ENCODE measurements at regions of chr17 and their contacts with region 1.

Region 1: DNA sequence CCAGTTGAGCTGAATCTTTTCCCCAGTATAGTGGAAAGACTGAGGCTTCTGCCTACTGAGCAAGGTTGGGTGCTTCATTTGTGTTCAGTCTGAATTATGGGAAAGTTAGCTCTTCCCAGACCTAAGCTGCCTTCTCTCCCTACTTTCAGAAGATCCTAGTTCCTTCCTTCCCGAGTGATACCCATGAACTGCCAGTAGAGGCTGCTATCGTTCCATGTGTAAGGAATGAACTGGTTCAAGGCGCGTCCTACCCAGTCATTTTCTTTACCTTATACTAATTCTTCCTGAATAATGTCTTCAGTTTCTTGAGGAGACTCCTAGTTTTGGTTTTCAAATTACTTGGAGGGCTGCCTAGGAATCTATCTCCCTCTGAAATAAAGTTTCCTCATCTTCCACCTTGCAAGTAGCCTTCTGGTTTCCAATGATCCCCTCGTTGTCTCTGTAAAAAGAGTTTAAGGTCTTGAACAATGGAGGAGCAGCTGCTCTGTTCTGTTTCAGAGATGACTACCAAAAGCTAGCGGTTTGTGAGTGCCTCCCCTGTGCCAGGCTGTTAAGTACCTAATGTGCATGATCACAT is 934 bp upstream of the AOC2 start:
- DNase-seq: peak; percentile 82 to 91
- ATAC-seq: peak; percentile 80 to 85
- H3K4me3 ChIP-seq: no peak overlapping the region
- H3K27ac ChIP-seq: no peak overlapping the region
- H3K4me1 ChIP-seq: no peaks in the 10 kb centered on the region
- CTCF ChIP-seq: peak; percentile 99
- EP300 ChIP-seq: no peak
- POLR2A ChIP-seq: no peak
- RAD21 ChIP-seq: peak; percentile 96 to 99

Region 2: DNA sequence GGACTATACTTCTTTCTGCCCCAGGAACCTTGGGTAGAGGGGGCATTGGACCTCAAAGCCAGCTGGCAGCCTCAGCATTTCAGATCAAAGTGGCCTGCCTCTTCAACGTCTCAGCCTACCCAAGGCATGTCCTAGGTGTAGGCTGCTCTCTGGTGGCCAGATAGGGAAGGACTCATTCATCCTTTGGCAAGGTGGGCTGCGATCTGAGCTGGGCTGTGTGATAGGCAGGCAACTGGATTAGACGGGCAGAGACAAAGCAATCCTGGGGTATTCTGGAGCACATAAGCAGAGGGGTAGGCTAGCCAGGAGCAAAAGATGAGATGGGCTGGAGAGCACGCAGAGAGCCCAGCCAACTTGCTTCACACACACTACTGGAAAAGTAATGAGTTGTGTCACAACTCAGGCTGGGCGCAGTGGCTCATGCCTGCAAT is 316.2 kb before region 1 on chr17:
- CTCF ChIA-PET with region 1: no interaction called
- POLR2A ChIA-PET with region 1: no interaction called
- DNase-seq: peak; percentile 79 to 91
- ATAC-seq: peak; percentile 85 to 92
- H3K4me3 ChIP-seq: no peak overlapping the region
- H3K27ac ChIP-seq: peak overlapping the region; percentile 50 to 80; a peak in 5 of 6 replicates
- H3K4me1 ChIP-seq: peaks cover 50% of the 10 kb centered on the region
- CTCF ChIP-seq: peak; percentile 98
- EP300 ChIP-seq: no peak
- POLR2A ChIP-seq: no peak
- RAD21 ChIP-seq: peak; percentile 99 to 100

Region 3: GRCh38 chr17:42809250-42809649 is 34.2 kb before region 1 on chr17:
- CTCF ChIA-PET with region 1: interaction called, 14 read pairs
- POLR2A ChIA-PET with region 1: no interaction called
- DNase-seq: peak; percentile 27 to 49
- ATAC-seq: peak; percentile 63 to 65; a peak in 3 of 6 replicates
- H3K4me3 ChIP-seq: no peak overlapping the region
- H3K27ac ChIP-seq: peak overlapping the region in 1 of 2 experiments; percentile 9; a peak in 1 of 6 replicates
- H3K4me1 ChIP-seq: peaks cover 21% of the 10 kb centered on the region
- CTCF ChIP-seq: no peak
- EP300 ChIP-seq: no peak
- POLR2A ChIP-seq: no peak
- RAD21 ChIP-seq: no peak

Region 4: DNA sequence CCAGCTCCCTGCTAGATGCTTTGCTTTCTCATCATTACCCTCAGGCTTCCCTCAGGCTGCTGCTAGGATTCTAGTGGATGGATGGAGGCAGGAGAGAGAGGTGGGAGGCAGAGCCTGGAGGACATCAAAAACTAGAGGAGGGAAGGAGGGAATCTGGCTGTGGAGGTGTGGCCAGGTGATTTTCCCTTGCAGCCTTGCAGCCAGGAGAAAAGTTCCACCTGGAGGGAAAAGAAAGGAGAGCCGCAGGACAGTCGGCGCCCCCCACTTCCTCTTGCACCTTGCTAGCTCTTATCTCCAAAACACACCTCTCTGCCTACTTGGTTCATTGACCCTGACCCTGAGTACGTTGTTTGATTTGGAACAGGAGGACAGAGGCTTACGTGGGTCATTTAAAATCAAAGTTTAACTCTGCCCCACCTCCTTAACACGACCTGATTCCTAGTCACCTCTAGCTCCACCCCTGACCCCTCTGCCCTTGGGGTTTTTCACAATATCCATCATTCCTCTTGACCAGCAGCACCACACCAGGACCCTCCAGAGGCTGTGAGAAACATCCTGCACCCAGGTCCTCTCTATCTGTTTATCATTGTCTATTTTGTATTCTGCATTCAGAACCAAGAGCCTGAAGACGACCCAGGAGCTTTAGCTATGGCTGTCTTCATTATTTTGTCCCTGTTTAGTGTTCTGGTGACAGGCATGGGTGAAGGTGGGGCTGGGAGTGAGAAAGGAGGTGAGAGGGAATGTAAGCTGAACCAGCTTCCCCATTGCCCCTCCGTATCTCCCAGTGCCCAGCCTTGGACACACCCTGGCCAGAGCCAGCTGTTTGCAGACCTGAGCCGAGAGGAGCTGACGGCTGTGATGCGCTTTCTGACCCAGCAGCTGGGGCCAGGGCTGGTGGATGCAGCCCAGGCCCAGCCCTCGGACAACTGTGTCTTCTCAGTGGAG is 23.5 kb after region 1 on chr17:
- CTCF ChIA-PET with region 1: interaction called, 89 read pairs
- POLR2A ChIA-PET with region 1: no interaction called
- DNase-seq: no peak
- ATAC-seq: peak; percentile 14 to 31; a peak in 2 of 6 replicates
- H3K4me3 ChIP-seq: no peak overlapping the region
- H3K27ac ChIP-seq: no peak overlapping the region
- H3K4me1 ChIP-seq: no peaks in the 10 kb centered on the region
- CTCF ChIP-seq: no peak
- EP300 ChIP-seq: no peak
- POLR2A ChIP-seq: no peak
- RAD21 ChIP-seq: no peak

Region 5: GRCh38 chr17:42895185-42895555 is 51.7 kb after region 1 on chr17:
- CTCF ChIA-PET with region 1: interaction called, 17 read pairs
- POLR2A ChIA-PET with region 1: no interaction called
- DNase-seq: peak; percentile 78 to 86
- ATAC-seq: peak; percentile 93 to 96
- H3K4me3 ChIP-seq: no peak overlapping the region
- H3K27ac ChIP-seq: peak overlapping the region; percentile 68 to 78
- H3K4me1 ChIP-seq: peaks cover 27% of the 10 kb centered on the region
- CTCF ChIP-seq: no peak
- EP300 ChIP-seq: no peak
- POLR2A ChIP-seq: no peak
- RAD21 ChIP-seq: no peak

Region 6: GRCh38 chr17:42937712-42938596 is 94.5 kb after region 1 on chr17:
- CTCF ChIA-PET with region 1: interaction called, 372 read pairs
- POLR2A ChIA-PET with region 1: no interaction called
- DNase-seq: peak; percentile 78 to 81
- ATAC-seq: peak; percentile 96
- H3K4me3 ChIP-seq: no peak overlapping the region
- H3K27ac ChIP-seq: no peak overlapping the region
- H3K4me1 ChIP-seq: no peaks in the 10 kb centered on the region
- CTCF ChIP-seq: peak; percentile 93
- EP300 ChIP-seq: no peak
- POLR2A ChIP-seq: no peak
- RAD21 ChIP-seq: peak; percentile 97 to 98

Region 7: GRCh38 chr17:42964161-42964932 is 120.9 kb after region 1 on chr17 and contains the start of gene AARSD1:
- CTCF ChIA-PET with region 1: interaction called, 14 read pairs
- POLR2A ChIA-PET with region 1: no interaction called
- DNase-seq: peak; percentile 93 to 98
- ATAC-seq: peak; percentile 94 to 98
- H3K4me3 ChIP-seq: peak within 1 kb of the TSS; percentile 79
- H3K27ac ChIP-seq: peak within 1 kb of the TSS; percentile 74 to 89
- H3K4me1 ChIP-seq: peaks cover 8% of the 10 kb centered on the region; the same call in 2 of the 3 replicates
- CTCF ChIP-seq: no peak
- EP300 ChIP-seq: no peak
- POLR2A ChIP-seq: peak; percentile 97
- RAD21 ChIP-seq: 0 out of 5 replicates have a peak, but pooled peaks of 1 of the 2 experiments have one; percentile 5
- polyA plus RNA-seq, gene AARSD1: 56.9 and 66.6 TPM in 2 replicates

Region 8: DNA sequence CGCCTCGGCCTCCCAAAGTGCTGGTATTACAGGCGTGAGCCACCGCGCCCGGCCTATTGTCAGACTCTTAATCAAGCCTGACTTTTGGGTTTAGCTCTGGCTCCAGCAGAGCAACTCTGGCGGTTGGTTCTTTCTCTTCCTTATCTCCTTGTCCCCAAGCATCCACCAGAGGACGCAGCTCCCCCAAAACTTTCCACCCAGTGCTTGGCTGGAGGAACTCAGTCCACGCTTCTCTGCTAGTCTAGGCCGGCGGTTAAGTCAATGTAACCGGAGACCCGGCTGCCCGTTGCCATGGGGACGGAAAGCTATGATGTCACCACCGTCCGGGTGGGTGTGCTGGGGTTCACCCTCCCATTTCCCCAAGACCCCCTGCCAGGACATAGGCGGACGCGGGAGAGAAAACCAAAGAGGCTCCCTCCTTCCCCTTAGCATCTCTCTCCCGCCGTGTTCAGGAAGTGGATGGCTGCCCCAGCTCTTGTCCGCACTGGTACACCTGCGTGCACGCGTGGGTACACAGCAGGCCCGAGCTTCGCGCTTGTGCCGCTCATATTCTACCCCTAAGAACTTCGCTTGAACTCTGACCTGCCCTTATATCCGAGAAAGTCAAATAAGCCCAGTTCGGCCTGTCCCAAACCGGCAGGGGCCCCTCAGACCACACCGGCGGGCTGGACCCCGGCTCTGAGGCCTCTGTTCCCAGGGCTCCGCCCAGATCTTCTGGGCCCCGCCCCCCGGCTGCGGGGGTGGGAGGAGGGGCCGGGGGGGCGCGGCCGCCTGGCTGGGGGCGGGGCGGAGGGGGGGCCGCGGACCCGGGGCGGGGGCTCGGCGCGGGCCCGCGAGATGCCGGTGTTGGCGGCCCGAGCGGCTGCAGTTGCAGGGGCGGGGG is 181.2 kb after region 1 on chr17 and contains the start of gene RND2:
- CTCF ChIA-PET with region 1: interaction called, 3 read pairs
- POLR2A ChIA-PET with region 1: interaction called, 12 read pairs
- DNase-seq: peak; percentile 96 to 99
- ATAC-seq: peak; percentile 52 to 69
- H3K4me3 ChIP-seq: peak within 1 kb of the TSS; percentile 53
- H3K27ac ChIP-seq: peak within 1 kb of the TSS; percentile 78 to 88
- H3K4me1 ChIP-seq: peaks cover 21% of the 10 kb centered on the region
- CTCF ChIP-seq: peak; percentile 73
- EP300 ChIP-seq: no peak
- POLR2A ChIP-seq: peak; percentile 46
- RAD21 ChIP-seq: peak; percentile 79 to 81
- polyA plus RNA-seq, gene RND2: 0.19 and 0.33 TPM in 2 replicates